Sigmoid colon (tissue), 7 donors: ENCODE measurements at regions of chr18 and their contacts with region 1.

Region 1: DNA sequence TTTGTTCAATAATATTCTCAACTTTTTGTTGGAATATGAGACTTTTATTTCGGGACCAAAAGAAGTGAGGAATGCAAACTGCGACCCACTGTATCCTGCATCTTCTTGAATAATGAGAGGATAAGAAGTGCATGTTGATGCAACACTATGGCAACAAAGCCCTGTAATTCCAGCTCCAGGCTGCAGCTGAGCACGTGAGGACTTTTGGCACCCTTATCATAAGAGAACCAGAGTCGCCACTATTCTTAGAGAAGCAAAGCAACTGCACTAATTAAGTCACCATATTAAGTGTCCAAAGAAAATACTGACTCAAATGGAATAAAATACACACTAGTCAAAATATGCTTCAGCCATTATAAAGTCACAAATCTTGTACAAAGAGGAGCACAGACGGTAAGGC is 65.8 kb downstream of the FAM210A start:
- DNase-seq: no peak
- H3K4me3 ChIP-seq: no peak overlapping the region
- H3K27ac ChIP-seq: peak overlapping the region in 1 of 4 donors; percentile 44
- H3K4me1 ChIP-seq: no peaks in the 10 kb centered on the region
- H3K27me3 ChIP-seq: no peaks in the 10 kb centered on the region
- CTCF ChIP-seq: no peak
- EP300 ChIP-seq: no peak
- POLR2A ChIP-seq: no peak

Region 2: DNA sequence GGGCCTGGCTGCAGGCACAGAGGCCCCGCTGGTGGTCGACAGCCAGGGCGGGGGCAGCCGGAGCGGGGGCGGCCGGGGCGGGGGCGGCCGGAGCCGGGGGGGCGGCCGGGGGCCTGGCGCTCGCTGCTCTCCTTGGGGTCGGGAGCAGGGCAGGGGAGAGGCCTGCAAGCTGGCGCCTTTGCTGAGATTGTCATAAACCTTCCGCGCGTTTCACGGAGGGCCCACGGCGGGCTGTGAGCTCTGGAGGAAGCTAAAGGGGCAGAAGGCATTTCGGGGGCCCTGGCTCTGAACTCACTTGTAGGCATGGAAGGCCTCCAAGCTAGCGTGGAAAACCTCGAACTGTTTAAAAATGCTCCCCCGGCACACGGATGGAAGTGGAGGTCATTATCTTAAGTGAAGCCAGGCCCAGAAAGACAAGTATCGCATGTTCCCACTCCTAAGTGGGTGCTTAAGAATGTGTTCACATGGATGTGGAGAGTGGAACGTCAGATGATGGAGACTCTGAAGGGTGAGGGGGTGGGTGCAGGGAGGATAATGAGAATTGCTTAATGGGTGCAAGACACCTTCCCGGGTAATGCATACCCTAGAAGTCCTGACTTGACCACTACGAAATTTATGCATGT is 1252.2 kb before region 1 on chr18:
- intact Hi-C with region 1: loop called (anchors 10 kb)
- DNase-seq: no peak
- H3K4me3 ChIP-seq: peak overlapping the region; percentile 49 to 71 (median 64)
- H3K27ac ChIP-seq: peak overlapping the region; percentile 86 to 93 (median 92)
- H3K4me1 ChIP-seq: peaks cover 0 to 28% (median 16%) of the 10 kb centered on the region in 4 donors
- H3K27me3 ChIP-seq: no peaks in the 10 kb centered on the region
- CTCF ChIP-seq: no peak
- EP300 ChIP-seq: no peak
- POLR2A ChIP-seq: no peak

Region 3: DNA sequence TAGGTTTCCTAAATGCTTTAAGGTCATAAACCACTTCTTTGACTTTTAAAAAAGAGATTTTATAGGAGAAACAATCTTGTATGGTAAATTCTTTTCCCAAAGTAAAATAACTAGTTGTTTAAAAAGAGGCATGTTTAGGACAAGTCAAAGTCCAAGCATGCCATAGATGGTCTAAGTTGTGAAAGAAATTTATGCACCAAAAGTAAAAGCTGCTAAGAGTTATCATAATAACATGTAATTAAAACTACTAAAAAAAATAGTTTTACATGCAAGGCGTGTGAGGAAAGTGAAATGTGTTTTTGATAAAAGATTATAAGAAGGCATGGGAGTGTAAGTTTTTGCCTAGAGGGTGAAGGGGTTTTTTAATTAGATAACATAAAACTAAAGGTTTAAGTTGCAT is 43.4 kb after region 1 on chr18:
- intact Hi-C with region 1: no loop called
- DNase-seq: no peak
- H3K4me3 ChIP-seq: no peak overlapping the region
- H3K27ac ChIP-seq: no peak overlapping the region
- H3K4me1 ChIP-seq: no peaks in the 10 kb centered on the region
- H3K27me3 ChIP-seq: no peaks in the 10 kb centered on the region
- CTCF ChIP-seq: no peak
- EP300 ChIP-seq: no peak
- POLR2A ChIP-seq: no peak